Naive thymus-derived CD4-positive, alpha-beta T cell (primary cell): ENCODE measurements at regions of chr2 and their contacts with region 1.

Region 1: DNA sequence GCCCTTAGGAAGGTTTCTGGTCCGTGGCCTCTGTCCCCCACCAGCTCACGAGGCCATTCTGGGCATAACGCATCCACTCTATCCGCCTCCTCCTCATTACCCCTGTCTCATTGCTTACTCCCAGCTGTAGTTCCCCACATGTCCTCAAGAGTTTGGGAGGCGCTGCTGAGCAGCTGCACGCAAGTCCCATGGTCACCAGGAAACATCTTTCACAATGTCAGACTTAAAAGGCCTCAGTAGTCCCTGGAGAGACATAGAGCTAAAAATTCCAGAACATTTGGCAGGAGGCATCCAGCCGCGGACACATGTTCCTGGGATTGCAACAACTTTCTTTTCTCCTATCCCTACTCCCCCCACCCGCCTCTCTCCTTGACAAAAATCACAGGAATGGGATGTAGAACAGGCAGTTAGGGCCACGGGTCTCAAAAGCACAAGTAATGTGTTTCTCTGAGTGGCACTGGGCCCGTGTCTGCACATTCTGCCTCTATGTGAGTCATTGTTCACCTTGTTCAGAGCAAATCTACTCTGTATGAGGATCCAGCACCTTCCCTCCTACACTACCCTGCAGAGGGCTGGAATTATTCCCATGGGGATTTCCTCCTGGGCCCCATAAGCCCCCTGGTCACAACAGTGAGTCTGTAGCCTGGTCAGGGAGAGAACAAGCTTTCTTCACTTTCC is 8.1 kb downstream of the LBH start:
- DNase-seq: peak; percentile 55 to 79 (median 74)
- ATAC-seq: peak; percentile 88
- H3K4me3 ChIP-seq: peak overlapping the region; percentile 45
- H3K4me3 Mint-ChIP-seq: peak overlapping the region; percentile 65 to 98 (median 92)
- H3K27ac ChIP-seq: peak overlapping the region; percentile 97
- H3K27ac Mint-ChIP-seq: peak overlapping the region; percentile 61 to 100 (median 90)
- H3K4me1 ChIP-seq: peaks cover 75 to 87% of the 10 kb centered on the region in 2 donors
- H3K4me1 Mint-ChIP-seq: peaks cover 68 to 97% (median 89%) of the 10 kb centered on the region in 7 donors
- H3K27me3 ChIP-seq: no peaks in the 10 kb centered on the region
- H3K27me3 Mint-ChIP-seq: no peaks in the 10 kb centered on the region

Region 2: GRCh38 chr2:29430382-29431112 is 808.9 kb before region 1 on chr2:
- CTCF ChIA-PET with region 1: no interaction called
- POLR2A ChIA-PET with region 1: no interaction called
- intact Hi-C with region 1: no loop called
- DNase-seq: no peak
- ATAC-seq: no peak
- H3K4me3 ChIP-seq: no peak overlapping the region
- H3K4me3 Mint-ChIP-seq: no peak overlapping the region
- H3K27ac ChIP-seq: no peak overlapping the region
- H3K27ac Mint-ChIP-seq: no peak overlapping the region
- H3K4me1 ChIP-seq: no peaks in the 10 kb centered on the region
- H3K4me1 Mint-ChIP-seq: no peaks in the 10 kb centered on the region
- H3K27me3 ChIP-seq: peaks cover 0 to 2% of the 10 kb centered on the region in 2 donors
- H3K27me3 Mint-ChIP-seq: peaks cover 0 to 28% (median 11%) of the 10 kb centered on the region in 5 donors

Region 3: GRCh38 chr2:30252723-30253701 is 13.6 kb after region 1 on chr2:
- CTCF ChIA-PET with region 1: interaction called, 7 read pairs
- POLR2A ChIA-PET with region 1: interaction called, 901 read pairs
- intact Hi-C with region 1: loop called (anchors 1 to 2 kb)
- DNase-seq: peak in 4 of 9 donors; percentile 38 to 83 (median 53)
- ATAC-seq: peak; percentile 36
- H3K4me3 ChIP-seq: no peak overlapping the region
- H3K4me3 Mint-ChIP-seq: peak overlapping the region; percentile 53 to 79 (median 72)
- H3K27ac ChIP-seq: peak overlapping the region; percentile 86
- H3K27ac Mint-ChIP-seq: peak overlapping the region; percentile 72 to 100 (median 97)
- H3K4me1 ChIP-seq: peaks cover 77 to 93% of the 10 kb centered on the region in 2 donors
- H3K4me1 Mint-ChIP-seq: peaks cover 65 to 99% (median 97%) of the 10 kb centered on the region in 7 donors
- H3K27me3 ChIP-seq: no peaks in the 10 kb centered on the region
- H3K27me3 Mint-ChIP-seq: no peaks in the 10 kb centered on the region

Region 4: GRCh38 chr2:30662268-30663131 is 423.1 kb after region 1 on chr2:
- CTCF ChIA-PET with region 1: no interaction called
- POLR2A ChIA-PET with region 1: no interaction called
- intact Hi-C with region 1: no loop called
- DNase-seq: no peak
- ATAC-seq: no peak
- H3K4me3 ChIP-seq: no peak overlapping the region
- H3K4me3 Mint-ChIP-seq: no peak overlapping the region
- H3K27ac ChIP-seq: no peak overlapping the region
- H3K27ac Mint-ChIP-seq: no peak overlapping the region
- H3K4me1 ChIP-seq: no peaks in the 10 kb centered on the region
- H3K4me1 Mint-ChIP-seq: peaks cover 0 to 4% (median 0%) of the 10 kb centered on the region in 7 donors
- H3K27me3 ChIP-seq: no peaks in the 10 kb centered on the region
- H3K27me3 Mint-ChIP-seq: peaks cover 0 to 3% (median 0%) of the 10 kb centered on the region in 5 donors